Naive thymus-derived CD4-positive, alpha-beta T cell (primary cell): ENCODE measurements at regions of chr5 and their contacts with region 1.

Region 1: DNA sequence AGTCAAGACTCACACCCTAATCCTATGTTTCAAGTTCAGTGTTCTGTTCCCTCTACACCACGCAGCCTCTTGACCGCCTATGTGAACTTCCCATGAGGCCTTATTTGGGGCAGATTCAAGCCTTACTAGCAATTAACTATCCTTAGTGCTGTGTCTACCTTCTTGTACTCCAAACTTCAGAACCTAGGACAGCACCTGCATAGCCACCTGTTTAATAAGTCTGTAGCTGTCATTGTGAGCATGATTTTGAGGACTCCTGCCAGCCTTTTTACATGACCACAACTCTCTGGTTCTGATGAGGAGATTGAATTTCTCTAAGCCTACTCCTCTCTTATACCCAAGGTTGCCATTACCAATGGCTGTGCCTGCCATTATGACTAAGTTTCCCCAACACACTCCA is 50.8 kb upstream of the PCSK1 start:
- DNase-seq: peak in 2 of 9 donors; percentile 0 to 5
- ATAC-seq: no peak
- H3K4me3 ChIP-seq: no peak overlapping the region
- H3K4me3 Mint-ChIP-seq: no peak overlapping the region
- H3K27ac ChIP-seq: no peak overlapping the region
- H3K27ac Mint-ChIP-seq: no peak overlapping the region
- H3K4me1 ChIP-seq: no peaks in the 10 kb centered on the region
- H3K4me1 Mint-ChIP-seq: no peaks in the 10 kb centered on the region
- H3K27me3 ChIP-seq: no peaks in the 10 kb centered on the region
- H3K27me3 Mint-ChIP-seq: peaks cover 5 to 27% (median 16%) of the 10 kb centered on the region in 5 donors

Region 2: DNA sequence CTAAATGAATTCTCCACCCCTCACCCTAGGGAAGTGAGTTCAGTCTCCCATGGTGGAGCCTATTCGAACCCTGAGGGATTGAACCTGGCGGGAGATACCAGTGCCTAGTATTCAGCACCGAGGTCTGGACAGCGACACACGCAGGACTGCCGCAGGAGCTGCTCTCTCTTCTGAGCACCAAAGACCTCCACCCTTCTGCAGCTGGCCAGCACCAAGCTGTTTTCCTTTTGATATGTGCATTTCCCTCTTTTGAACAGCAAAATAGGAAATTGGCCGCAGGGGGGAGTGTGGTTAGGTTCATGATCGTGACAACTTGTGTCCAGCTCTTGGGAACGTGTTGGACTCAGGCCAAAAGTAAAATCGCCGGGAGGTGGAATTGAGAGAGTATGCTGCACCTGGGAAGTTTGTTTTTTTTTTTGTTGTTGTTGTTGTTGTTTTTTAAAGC is 49.7 kb before region 1 on chr5:
- CTCF ChIA-PET with region 1: no interaction called
- POLR2A ChIA-PET with region 1: no interaction called
- intact Hi-C with region 1: loop called in 1 of 2 experiments (anchors 2 kb)
- DNase-seq: peak in 6 of 9 donors; percentile 8 to 34 (median 19)
- ATAC-seq: peak; percentile 61
- H3K4me3 ChIP-seq: no peak overlapping the region
- H3K4me3 Mint-ChIP-seq: no peak overlapping the region
- H3K27ac ChIP-seq: no peak overlapping the region
- H3K27ac Mint-ChIP-seq: no peak overlapping the region
- H3K4me1 ChIP-seq: no peaks in the 10 kb centered on the region
- H3K4me1 Mint-ChIP-seq: peaks cover 3 to 25% (median 9%) of the 10 kb centered on the region in 7 donors
- H3K27me3 ChIP-seq: peaks cover 10% of the 10 kb centered on the region in 2 donors
- H3K27me3 Mint-ChIP-seq: peaks cover 76 to 91% (median 79%) of the 10 kb centered on the region in 5 donors

Region 3: GRCh38 chr5:96885518-96886338 is 401.9 kb after region 1 on chr5:
- CTCF ChIA-PET with region 1: no interaction called
- POLR2A ChIA-PET with region 1: no interaction called
- intact Hi-C with region 1: no loop called
- DNase-seq: peak in 7 of 9 donors; percentile 46 to 81 (median 69)
- ATAC-seq: peak; percentile 93
- H3K4me3 ChIP-seq: peak overlapping the region; percentile 38
- H3K4me3 Mint-ChIP-seq: peak overlapping the region; percentile 67 to 87 (median 78)
- H3K27ac ChIP-seq: peak overlapping the region; percentile 63
- H3K27ac Mint-ChIP-seq: peak overlapping the region; percentile 91 to 99 (median 96)
- H3K4me1 ChIP-seq: peaks cover 56 to 58% of the 10 kb centered on the region in 2 donors
- H3K4me1 Mint-ChIP-seq: peaks cover 44 to 76% (median 69%) of the 10 kb centered on the region in 7 donors
- H3K27me3 ChIP-seq: no peaks in the 10 kb centered on the region
- H3K27me3 Mint-ChIP-seq: no peaks in the 10 kb centered on the region